ENCODE measurements at regions of chr20 and their contacts with region 1.

Region 1: DNA sequence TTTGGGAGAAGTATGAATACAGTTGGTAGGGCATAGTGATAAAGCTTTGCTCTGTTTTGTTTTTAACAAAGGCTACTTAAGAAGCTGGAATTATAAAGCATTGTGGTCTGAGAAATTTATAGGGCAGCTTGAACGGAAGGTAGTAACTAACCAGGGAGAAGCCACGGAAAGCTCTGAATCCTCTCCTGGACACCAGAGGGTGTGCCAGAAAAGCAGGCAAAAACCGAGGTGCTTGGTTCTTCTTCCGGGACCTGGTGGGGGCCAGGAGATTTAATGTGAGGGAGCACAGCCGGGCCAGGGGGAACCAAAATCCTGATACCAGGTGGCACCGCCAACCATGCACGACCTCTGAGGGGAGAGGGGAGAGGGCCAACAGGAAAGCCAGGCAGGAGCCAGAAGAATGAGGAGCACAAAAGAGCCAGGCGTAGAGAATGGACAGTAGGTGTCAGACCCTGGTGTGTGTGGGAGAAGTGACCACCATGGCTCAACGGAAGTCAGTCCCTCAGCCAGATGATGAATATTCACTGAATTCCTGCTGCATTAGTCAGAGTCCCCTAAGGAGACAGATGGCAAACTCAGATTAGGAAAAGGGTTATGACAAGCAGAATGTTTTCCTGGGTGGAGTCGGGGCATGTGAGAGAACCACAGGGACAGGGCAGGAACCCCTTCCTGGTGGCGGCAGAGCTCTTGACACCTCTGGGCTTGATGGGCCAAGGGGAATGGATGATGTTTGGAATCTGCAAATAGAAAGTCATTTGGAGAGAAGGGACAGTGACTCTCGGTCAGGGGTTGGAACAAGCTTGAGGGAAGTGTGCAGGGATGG is 262.3 kb downstream of the ZNF217 start:
- DNase-seq: no peak

Region 2: GRCh38 chr20:53381568-53382262 is 50.4 kb after region 1 on chr20:
- intact Hi-C with region 1: loop called (anchors 10 kb)
- DNase-seq: no peak